Activated naive CD4-positive, alpha-beta T cell treated with anti-CD3 and anti-CD28 coated beads for 36 hours (primary cell): ENCODE measurements at regions of chr14 and their contacts with region 1.

Region 1: GRCh38 chr14:57533214-57533613 is 39.6 kb upstream of the CCDC198 start:
- DNase-seq: peak; percentile 45
- H3K4me3 Mint-ChIP-seq: no peak overlapping the region
- H3K27ac Mint-ChIP-seq: no peak overlapping the region
- H3K4me1 Mint-ChIP-seq: no peaks in the 10 kb centered on the region
- H3K27me3 Mint-ChIP-seq: peaks cover 4% of the 10 kb centered on the region

Region 2: GRCh38 chr14:57871459-57872080 is 338.4 kb after region 1 on chr14:
- CTCF ChIA-PET with region 1: no interaction called
- intact Hi-C with region 1: loop called (anchors 2 kb)
- DNase-seq: peak; percentile 31
- H3K4me3 Mint-ChIP-seq: no peak overlapping the region
- H3K27ac Mint-ChIP-seq: no peak overlapping the region
- H3K4me1 Mint-ChIP-seq: no peaks in the 10 kb centered on the region
- H3K27me3 Mint-ChIP-seq: peaks cover 12% of the 10 kb centered on the region